ENCODE measurements at regions of chr12 and their contacts with region 1.

Region 1: GRCh38 chr12:80269803-80270552 is 170.6 kb downstream of the OTOGL start:
- DNase-seq: no peak
- H3K4me3 ChIP-seq: no peak overlapping the region
- H3K27me3 ChIP-seq: no peaks in the 10 kb centered on the region
- CTCF ChIP-seq: peak; percentile 59

Region 2: GRCh38 chr12:80186727-80187217 is 83.2 kb before region 1 on chr12:
- CTCF ChIA-PET with region 1: interaction called, 41 read pairs
- POLR2A ChIA-PET with region 1: no interaction called
- DNase-seq: peak; percentile 72
- H3K4me3 ChIP-seq: no peak overlapping the region
- H3K27me3 ChIP-seq: no peaks in the 10 kb centered on the region
- CTCF ChIP-seq: peak; percentile 83

Region 3: DNA sequence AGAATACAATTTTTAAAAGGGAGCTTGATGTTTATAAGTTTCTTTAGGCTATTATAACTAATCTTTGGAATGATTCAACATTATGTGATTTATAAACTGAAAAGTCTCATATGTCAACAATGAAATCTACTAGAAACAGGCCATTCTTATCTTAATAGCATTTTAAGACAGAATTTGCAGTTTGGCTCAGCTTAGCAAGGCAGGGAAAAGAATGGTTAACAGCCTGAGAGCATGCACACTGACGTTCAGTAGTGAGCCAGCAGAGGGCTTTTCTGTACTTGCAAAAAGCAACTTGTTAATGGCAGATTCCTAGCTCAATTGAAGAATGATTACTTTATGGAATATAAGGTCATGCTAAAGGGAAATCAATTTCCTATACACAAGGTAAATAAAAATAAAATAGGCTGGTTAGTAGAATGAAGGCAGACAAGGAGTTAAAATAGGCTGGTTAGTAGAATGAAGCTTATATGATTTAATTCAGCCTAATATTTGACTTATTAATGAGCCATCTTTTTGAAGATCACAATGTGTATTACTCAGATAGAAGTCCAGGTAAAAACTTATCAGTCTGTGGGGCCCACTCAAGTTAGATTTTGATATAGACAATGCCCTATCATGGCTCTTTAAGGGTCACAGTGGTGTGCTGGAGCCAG is 74.8 kb before region 1 on chr12:
- CTCF ChIA-PET with region 1: interaction called, 68 read pairs
- POLR2A ChIA-PET with region 1: no interaction called
- DNase-seq: no peak
- H3K4me3 ChIP-seq: no peak overlapping the region
- H3K27me3 ChIP-seq: no peaks in the 10 kb centered on the region
- CTCF ChIP-seq: peak; percentile 78

Region 4: DNA sequence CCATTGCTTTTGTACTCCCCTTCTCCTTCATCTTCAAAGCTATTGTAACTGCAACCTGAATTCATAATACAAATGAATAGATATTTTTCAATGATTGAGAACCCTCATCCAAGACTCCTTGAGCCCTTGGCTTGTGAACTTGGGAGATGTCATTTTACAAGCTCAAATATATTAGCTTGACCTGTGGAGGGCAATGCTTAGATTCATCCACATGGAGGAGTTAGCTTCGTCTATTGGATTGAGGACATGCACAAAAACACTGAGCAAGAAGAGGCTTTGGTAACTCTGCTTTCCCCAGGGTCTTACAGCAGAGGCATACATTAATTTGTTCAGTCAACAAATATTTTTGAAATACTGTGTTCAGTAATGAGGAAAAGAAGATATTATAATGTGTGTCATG is 69.6 kb before region 1 on chr12:
- CTCF ChIA-PET with region 1: interaction called, 68 read pairs
- POLR2A ChIA-PET with region 1: no interaction called
- DNase-seq: no peak
- H3K4me3 ChIP-seq: no peak overlapping the region
- H3K27me3 ChIP-seq: no peaks in the 10 kb centered on the region
- CTCF ChIP-seq: no peak